A549 (cell line): ENCODE measurements at regions of chr2 and their contacts with region 1.

Region 1: GRCh38 chr2:47043142-47043890 is 111.8 kb downstream of the STPG4 start:
- DNase-seq: peak; percentile 81 to 96
- ATAC-seq: peak; percentile 87 to 88
- H3K4me3 ChIP-seq: no peak overlapping the region; the same call in 2 of the 3 replicates
- H3K27ac ChIP-seq: peak overlapping the region; percentile 86 to 97
- H3K4me1 ChIP-seq: peaks cover 54% of the 10 kb centered on the region
- CTCF ChIP-seq: no peak; the same call in 2 of the 3 replicates
- EP300 ChIP-seq: peak in 1 of 2 experiments; percentile 37; a peak in 1 of 5 replicates
- POLR2A ChIP-seq: no peak
- RAD21 ChIP-seq: peak; percentile 32 to 33; a peak in 4 of 5 replicates

Region 2: GRCh38 chr2:46878886-46879285 is 164.4 kb before region 1 on chr2:
- CTCF ChIA-PET with region 1: no interaction called
- POLR2A ChIA-PET with region 1: no interaction called
- DNase-seq: peak in 1 of 2 experiments; percentile 20
- ATAC-seq: no peak
- H3K4me3 ChIP-seq: no peak overlapping the region
- H3K27ac ChIP-seq: peak overlapping the region; percentile 87 to 91
- H3K4me1 ChIP-seq: peaks cover 88% of the 10 kb centered on the region
- CTCF ChIP-seq: no peak
- EP300 ChIP-seq: no peak
- POLR2A ChIP-seq: no peak
- RAD21 ChIP-seq: no peak

Region 3: GRCh38 chr2:47019961-47020681 is 23.2 kb before region 1 on chr2:
- CTCF ChIA-PET with region 1: no interaction called
- POLR2A ChIA-PET with region 1: no interaction called
- DNase-seq: no peak
- ATAC-seq: no peak
- H3K4me3 ChIP-seq: no peak overlapping the region
- H3K27ac ChIP-seq: peak overlapping the region in 1 of 2 experiments; percentile 26; a peak in 2 of 6 replicates
- H3K4me1 ChIP-seq: peaks cover 25% of the 10 kb centered on the region
- CTCF ChIP-seq: no peak
- EP300 ChIP-seq: no peak
- POLR2A ChIP-seq: no peak
- RAD21 ChIP-seq: no peak

Region 4: GRCh38 chr2:47076586-47077441 is 33.5 kb after region 1 on chr2:
- CTCF ChIA-PET with region 1: interaction called, 13 read pairs
- POLR2A ChIA-PET with region 1: interaction called, 6 read pairs
- DNase-seq: peak; percentile 99 to 100
- ATAC-seq: peak; percentile 81 to 87
- H3K4me3 ChIP-seq: no peak overlapping the region
- H3K27ac ChIP-seq: peak overlapping the region; percentile 90 to 98
- H3K4me1 ChIP-seq: peaks cover 69% of the 10 kb centered on the region
- CTCF ChIP-seq: no peak
- EP300 ChIP-seq: peak; percentile 94 to 97; a peak in 4 of 5 replicates
- POLR2A ChIP-seq: no peak
- RAD21 ChIP-seq: peak; percentile 42 to 69